GM13977 (cell line): ENCODE measurements at regions of chr6 and their contacts with region 1.

Region 1: GRCh38 chr6:45922728-45923351 is 92.8 kb downstream of the CLIC5 start:
- DNase-seq: peak; percentile 50
- CTCF ChIP-seq: peak; percentile 73

Region 2: DNA sequence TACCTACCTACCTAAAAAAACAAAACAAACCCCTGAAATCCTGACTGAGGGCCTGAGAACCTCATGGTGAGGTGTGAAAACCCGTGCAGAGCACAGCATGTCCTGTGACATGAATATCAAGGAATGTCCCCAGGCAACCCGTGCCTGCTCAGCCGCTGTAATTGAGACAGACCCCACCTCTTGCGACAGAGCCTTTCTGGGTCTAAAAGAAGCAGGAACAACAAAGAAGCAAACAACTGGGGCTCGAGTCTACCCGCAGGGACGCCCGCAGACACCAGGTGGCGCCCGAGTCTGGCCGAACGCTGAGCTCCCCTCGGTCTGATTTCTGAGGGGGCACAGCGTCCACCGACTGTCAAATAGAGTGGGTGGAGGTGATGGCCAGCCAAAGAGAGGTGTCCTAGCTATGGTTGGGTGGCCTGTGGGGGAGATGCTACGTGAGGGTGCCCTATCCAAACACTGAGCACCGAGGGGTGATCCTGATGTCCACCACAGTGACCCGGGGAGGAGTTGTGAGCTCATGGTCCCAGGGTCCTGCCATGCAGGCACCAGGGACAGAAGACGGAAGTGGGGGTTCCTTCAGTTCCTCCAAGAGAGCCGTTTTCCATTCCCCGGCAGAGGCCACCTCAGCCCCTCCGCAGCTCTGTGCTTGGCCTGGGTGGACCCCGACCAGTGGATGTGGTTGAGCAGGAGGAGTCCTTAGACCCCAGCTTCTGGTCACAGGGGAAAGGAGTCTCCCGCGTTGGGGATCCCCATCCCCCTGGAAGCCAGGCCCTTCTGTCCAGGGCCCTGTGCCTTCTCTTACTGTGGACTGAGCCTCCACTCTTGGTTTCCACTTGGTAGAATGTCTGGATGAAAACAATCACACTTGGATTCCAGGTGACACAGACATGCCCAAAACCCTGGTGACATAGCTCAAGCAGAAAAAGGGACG is 1267.2 kb before region 1 on chr6:
- in situ Hi-C with region 1: loop called (anchors 25 kb)
- DNase-seq: peak; percentile 78
- CTCF ChIP-seq: peak; percentile 96

Region 3: GRCh38 chr6:45445749-45446549 is 476.9 kb before region 1 on chr6:
- in situ Hi-C with region 1: loop called (anchors 25 kb)
- DNase-seq: no peak
- CTCF ChIP-seq: no peak